ENCODE measurements at regions of chr9 and their contacts with region 1.

Region 1: DNA sequence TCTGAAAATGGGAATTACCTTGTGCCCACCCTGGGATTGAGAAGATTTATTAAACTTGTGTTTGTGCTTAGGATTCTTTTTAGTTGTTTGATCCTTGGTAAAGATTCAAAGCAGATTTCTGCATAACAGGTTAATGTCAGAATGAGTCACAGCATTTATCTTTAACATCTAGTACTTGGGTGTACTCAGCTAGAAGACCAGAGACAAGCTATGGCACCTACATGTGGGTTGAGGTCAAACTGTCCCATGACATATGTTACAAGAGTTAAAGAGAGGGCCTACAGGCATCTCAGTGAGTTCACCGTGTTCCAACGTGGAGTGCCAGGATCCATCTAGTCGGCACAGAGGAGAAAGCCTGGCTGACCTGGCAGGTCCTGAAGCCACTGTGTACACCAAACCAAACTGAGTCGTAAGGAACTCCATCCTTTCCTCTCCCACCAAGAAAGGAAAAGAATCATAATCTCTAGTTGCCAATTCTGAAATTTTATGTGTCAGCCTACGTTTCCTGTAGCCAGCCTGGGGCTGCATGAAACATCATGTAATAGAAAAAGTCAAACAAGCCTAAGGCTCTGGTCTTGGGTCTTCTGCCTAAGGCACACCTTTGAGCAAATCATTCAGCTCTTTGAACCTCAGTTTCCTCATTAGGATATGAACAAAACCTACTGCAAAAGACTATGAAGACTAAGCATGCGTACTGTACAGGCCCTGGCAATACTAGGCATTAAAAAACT is 73.7 kb downstream of the RCL1 start:
- DNase-seq: peak; percentile 67
- H3K4me3 Mint-ChIP-seq: peak overlapping the region; percentile 35
- H3K27ac Mint-ChIP-seq: peak overlapping the region; percentile 81
- H3K4me1 Mint-ChIP-seq: peaks cover 32% of the 10 kb centered on the region
- H3K27me3 Mint-ChIP-seq: no peaks in the 10 kb centered on the region

Region 2: DNA sequence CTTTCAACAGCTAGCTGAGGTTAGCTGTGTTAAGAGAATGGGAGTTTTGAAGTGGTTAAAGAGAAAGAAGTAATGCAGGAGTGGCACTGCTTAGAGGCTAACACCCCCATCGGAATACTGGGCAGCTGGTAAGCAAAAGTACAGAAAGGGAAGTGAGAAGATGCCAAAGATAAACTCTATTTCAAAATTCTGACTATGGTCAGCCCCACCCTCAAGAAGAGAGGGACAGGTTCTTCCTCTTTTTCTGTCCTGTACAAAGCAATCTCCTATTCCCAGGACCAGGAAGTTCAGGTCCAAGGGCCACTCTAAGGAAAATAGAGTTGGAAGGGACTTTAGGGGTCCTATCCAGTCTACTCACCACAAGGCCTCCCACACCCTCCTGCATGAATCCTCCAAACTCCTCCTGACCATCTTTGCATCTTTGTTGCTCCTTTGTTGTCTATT is 72.7 kb after region 1 on chr9:
- intact Hi-C with region 1: loop called (anchors 1 kb)
- DNase-seq: peak; percentile 83
- H3K4me3 Mint-ChIP-seq: peak overlapping the region; percentile 40
- H3K27ac Mint-ChIP-seq: peak overlapping the region; percentile 92
- H3K4me1 Mint-ChIP-seq: peaks cover 67% of the 10 kb centered on the region
- H3K27me3 Mint-ChIP-seq: no peaks in the 10 kb centered on the region

Region 3: DNA sequence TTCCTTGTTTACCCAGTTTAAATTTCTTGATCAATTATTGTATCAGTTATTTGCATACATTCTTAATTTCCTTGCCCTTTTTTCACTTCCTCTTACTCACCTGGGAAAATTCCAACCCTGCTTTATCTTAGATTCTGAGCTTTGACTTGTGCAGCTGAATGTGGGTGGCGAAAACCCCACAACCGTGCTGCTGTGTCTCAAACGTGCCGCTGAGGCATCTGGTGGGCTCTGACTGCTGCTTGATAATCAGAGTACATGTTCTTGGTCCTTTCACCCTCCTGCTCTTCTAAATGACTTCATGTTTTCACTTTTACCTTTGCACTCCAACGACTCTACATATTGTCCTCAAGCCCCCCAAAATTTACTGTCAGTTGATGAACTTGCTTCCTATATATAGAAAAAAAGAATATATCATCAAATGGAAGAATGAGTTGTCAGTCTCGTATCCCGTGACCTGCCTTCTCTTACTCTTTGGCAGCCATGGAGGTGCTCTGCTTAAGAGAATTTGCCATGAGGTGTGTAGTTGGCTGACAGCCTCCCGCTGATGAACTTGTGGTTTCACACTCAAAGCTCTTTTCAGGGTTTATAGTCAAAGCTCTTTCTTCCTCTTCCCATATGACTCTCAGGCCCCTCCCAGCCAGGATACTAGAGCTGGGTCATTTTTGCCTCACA is 104.7 kb after region 1 on chr9:
- intact Hi-C with region 1: loop called (anchors 1 kb)
- DNase-seq: peak; percentile 88
- H3K4me3 Mint-ChIP-seq: no peak overlapping the region
- H3K27ac Mint-ChIP-seq: no peak overlapping the region
- H3K4me1 Mint-ChIP-seq: peaks cover 20% of the 10 kb centered on the region
- H3K27me3 Mint-ChIP-seq: no peaks in the 10 kb centered on the region